ENCODE measurements at regions of chr3 and their contacts with region 1.

Region 1: DNA sequence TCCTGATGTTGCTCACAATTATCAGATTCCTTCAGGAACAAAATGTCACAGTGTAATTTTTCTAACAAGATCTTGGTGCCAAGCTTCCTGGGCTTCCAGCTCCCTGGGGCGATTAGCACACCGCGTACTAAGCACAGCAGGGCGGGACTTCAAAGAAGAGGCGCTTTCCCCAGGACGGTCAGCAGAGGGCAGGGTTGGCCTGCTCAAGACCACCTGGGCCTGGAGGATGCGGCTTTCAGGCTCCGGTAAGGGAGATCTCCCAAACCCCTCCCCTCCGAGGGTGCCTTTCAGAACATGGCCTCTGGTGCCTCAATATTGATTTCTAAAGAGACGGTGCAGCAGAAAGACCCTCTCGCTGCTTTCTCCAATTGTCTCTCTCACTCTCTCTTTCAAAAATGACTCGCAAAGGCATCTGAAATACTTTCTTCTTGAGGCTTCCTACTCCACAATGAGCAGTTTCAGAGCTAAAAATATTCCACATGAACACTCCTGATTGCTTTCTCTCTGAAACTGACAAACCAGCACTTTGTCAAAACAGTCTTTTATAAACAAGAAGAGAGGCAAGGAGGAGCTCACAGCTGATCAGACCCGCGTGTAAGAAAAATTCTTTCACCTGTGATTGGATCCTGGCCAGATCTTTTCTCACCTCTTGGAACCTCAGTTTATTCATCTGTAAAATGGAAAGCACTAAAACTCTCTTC is 154.0 kb downstream of the ADAMTS9 start:
- DNase-seq: peak; percentile 91 to 96
- H3K4me3 ChIP-seq: peak overlapping the region in 1 of 4 donors; percentile 3
- H3K27ac ChIP-seq: peak overlapping the region in 1 of 5 donors; percentile 67
- H3K4me1 ChIP-seq: peaks cover 0 to 35% (median 8%) of the 10 kb centered on the region in 4 donors
- H3K27me3 ChIP-seq: no peaks in the 10 kb centered on the region
- CTCF ChIP-seq: peak in 5 of 7 experiments; percentile 75 to 89 (median 78)
- EP300 ChIP-seq: peak; percentile 76
- POLR2A ChIP-seq: no peak

Region 2: DNA sequence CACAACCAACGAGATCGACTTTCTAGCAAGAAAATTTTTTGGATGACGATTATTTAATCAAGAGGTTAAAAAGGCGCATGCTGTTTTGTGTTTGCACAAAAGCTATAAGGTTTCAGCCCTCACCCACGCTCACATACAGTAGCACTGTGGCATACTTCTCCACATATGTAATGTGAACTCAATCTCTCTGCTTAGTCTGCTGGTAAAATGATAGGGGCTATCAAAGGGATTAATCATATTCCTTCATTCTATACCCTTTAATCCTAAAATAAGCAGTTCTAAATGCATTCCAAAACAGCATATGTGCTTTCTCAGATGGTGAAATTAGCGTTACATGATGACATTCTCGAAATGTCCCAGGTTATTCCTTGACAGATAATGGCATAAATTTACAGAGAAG is 111.6 kb before region 1 on chr3:
- intact Hi-C with region 1: no loop called
- DNase-seq: no peak
- H3K4me3 ChIP-seq: no peak overlapping the region
- H3K27ac ChIP-seq: no peak overlapping the region
- H3K4me1 ChIP-seq: no peaks in the 10 kb centered on the region
- H3K27me3 ChIP-seq: no peaks in the 10 kb centered on the region
- CTCF ChIP-seq: no peak
- EP300 ChIP-seq: no peak
- POLR2A ChIP-seq: no peak

Region 3: GRCh38 chr3:64454179-64454578 is 79.6 kb before region 1 on chr3:
- intact Hi-C with region 1: no loop called
- DNase-seq: no peak
- H3K4me3 ChIP-seq: no peak overlapping the region
- H3K27ac ChIP-seq: no peak overlapping the region
- H3K4me1 ChIP-seq: peaks cover 0 to 8% (median 3%) of the 10 kb centered on the region in 4 donors
- H3K27me3 ChIP-seq: no peaks in the 10 kb centered on the region
- CTCF ChIP-seq: no peak
- EP300 ChIP-seq: no peak
- POLR2A ChIP-seq: no peak

Region 4: GRCh38 chr3:64691051-64691450 is 157.3 kb after region 1 on chr3:
- intact Hi-C with region 1: no loop called
- DNase-seq: peak in 1 of 2 donors; percentile 24
- H3K4me3 ChIP-seq: no peak overlapping the region
- H3K27ac ChIP-seq: no peak overlapping the region
- H3K4me1 ChIP-seq: peaks cover 0 to 36% (median 29%) of the 10 kb centered on the region in 4 donors
- H3K27me3 ChIP-seq: peaks cover 0 to 28% (median 6%) of the 10 kb centered on the region in 3 donors
- CTCF ChIP-seq: no peak
- EP300 ChIP-seq: no peak
- POLR2A ChIP-seq: no peak

Region 5: GRCh38 chr3:64908292-64908691 is 374.5 kb after region 1 on chr3:
- intact Hi-C with region 1: no loop called
- DNase-seq: peak in 1 of 2 donors; percentile 23
- H3K4me3 ChIP-seq: no peak overlapping the region
- H3K27ac ChIP-seq: peak overlapping the region in 4 of 5 donors; percentile 16 to 61 (median 40)
- H3K4me1 ChIP-seq: peaks cover 0 to 18% (median 10%) of the 10 kb centered on the region in 4 donors
- H3K27me3 ChIP-seq: no peaks in the 10 kb centered on the region
- CTCF ChIP-seq: no peak
- EP300 ChIP-seq: no peak
- POLR2A ChIP-seq: no peak

Region 6: GRCh38 chr3:65245133-65246063 is 711.6 kb after region 1 on chr3:
- intact Hi-C with region 1: loop called (anchors 5 kb)
- DNase-seq: peak in 1 of 2 donors; percentile 52
- H3K4me3 ChIP-seq: no peak overlapping the region
- H3K27ac ChIP-seq: no peak overlapping the region
- H3K4me1 ChIP-seq: no peaks in the 10 kb centered on the region
- H3K27me3 ChIP-seq: no peaks in the 10 kb centered on the region
- CTCF ChIP-seq: peak in 3 of 7 experiments; percentile 20 to 33 (median 27)
- EP300 ChIP-seq: no peak
- POLR2A ChIP-seq: no peak